Sciatic nerve (tissue), 2 donors: ENCODE measurements at regions of chr10 and their contacts with region 1.

Region 1: DNA sequence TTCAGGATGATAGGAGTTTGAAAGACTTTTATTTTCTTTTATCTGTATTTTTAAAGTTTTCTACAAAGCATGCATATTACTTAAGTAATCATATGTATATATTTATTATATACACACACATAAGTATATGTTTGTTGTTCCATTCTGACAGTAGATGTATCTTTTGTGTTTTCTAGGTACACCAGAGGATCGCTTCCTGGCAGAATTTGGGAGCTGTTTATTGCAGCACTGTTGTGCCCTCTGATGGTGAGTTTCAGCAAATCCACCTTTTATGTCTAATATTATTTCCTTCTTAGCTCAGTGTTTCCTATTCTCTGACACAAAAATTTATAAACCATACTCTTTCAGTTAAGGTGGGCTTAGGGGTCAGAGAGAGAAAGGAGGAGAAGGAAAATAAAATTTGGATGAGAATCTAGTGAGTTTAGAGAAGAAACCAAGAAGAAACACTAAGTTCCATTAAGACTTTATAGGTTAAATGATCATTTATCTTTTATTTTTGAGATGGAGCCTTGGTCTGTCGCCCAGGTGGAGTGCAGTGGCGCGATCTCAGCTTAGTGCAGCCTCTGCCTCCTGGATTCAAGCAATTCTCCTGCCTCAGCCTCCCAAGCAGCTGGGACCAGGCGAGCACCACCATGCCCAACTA is 59.2 kb upstream of the OIT3 start:
- DNase-seq: no peak
- ATAC-seq: peak; percentile 85

Region 2: GRCh38 chr10:72367301-72367960 is 466.9 kb before region 1 on chr10:
- intact Hi-C with region 1: loop called (anchors 5 kb)
- DNase-seq: no peak
- ATAC-seq: no peak

Region 3: GRCh38 chr10:72702868-72703581 is 131.3 kb before region 1 on chr10:
- intact Hi-C with region 1: loop called (anchors 10 kb)
- DNase-seq: no peak
- ATAC-seq: peak; percentile 60

Region 4: GRCh38 chr10:73232887-73233286 is 398.6 kb after region 1 on chr10:
- intact Hi-C with region 1: no loop called
- DNase-seq: no peak
- ATAC-seq: no peak